ENCODE measurements at regions of chr19 and their contacts with region 1.

Region 1: DNA sequence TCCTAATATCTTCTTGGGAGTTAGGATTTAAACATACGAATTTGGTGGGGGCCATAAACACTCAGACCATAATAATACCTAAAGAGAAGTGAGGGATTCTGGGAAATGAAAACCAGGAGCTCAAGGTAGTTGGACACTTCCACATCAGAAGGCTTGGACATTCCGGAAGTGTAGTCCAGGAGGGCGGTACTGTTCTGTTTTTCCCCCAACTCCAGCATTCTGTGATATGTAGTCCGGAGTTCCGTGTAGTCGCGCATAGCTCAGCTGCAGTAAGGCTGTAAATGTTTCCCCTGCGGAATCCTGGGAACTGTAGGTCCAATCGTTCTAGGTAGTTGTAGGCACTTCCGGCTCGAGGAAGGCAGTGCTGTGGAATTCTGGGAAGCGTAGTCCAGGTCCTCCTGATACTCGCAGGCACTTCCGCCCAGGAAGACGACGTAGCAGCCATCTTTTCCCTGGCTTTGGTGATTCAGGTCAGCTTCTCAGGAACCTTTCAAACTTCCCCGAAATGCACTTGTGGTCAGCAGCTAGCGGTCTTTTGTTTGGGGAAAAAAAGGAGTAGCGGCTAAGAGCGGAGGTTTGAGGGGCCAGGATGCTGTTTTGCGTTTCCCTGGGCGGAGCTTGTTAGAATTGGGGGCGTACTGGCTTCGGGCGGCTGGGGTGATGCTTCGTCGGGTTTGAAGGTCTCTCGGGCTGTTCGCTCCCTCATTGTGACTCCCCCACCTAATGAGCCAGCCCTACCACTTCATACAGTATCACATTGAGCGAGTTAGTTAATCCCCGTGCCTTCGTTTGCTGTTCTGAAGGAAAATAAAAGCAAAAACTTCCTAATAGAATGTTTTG is at the start of gene ZNF226:
- DNase-seq: peak; percentile 99
- ATAC-seq: peak; percentile 97
- H3K4me3 ChIP-seq: peak within 1 kb of the TSS; percentile 72
- H3K27ac ChIP-seq: peak within 1 kb of the TSS; percentile 88
- H3K4me1 ChIP-seq: no peaks in the 10 kb centered on the region
- H3K27me3 ChIP-seq: no peaks in the 10 kb centered on the region
- CTCF ChIP-seq: no peak
- POLR2A ChIP-seq: peak; percentile 24; the same call in 1 of the 2 replicates
- RAD21 ChIP-seq: no peak
- total RNA-seq, gene ZNF226: 14.0 and 16.7 TPM in 2 replicates

Region 2: GRCh38 chr19:43997631-43998290 is 167.1 kb before region 1 on chr19:
- CTCF ChIA-PET with region 1: no interaction called
- POLR2A ChIA-PET with region 1: no interaction called
- dilution Hi-C with region 1: no loop called
- in situ Hi-C with region 1: no loop called
- intact Hi-C with region 1: no loop called
- DNase-seq: peak; percentile 24
- ATAC-seq: no peak
- H3K4me3 ChIP-seq: no peak overlapping the region
- H3K27ac ChIP-seq: no peak overlapping the region
- H3K4me1 ChIP-seq: no peaks in the 10 kb centered on the region
- H3K27me3 ChIP-seq: no peaks in the 10 kb centered on the region
- CTCF ChIP-seq: no peak
- POLR2A ChIP-seq: no peak
- RAD21 ChIP-seq: no peak

Region 3: GRCh38 chr19:44113138-44113783 is 51.6 kb before region 1 on chr19 and contains the start of gene ZNF225:
- CTCF ChIA-PET with region 1: no interaction called
- POLR2A ChIA-PET with region 1: no interaction called
- dilution Hi-C with region 1: no loop called
- in situ Hi-C with region 1: no loop called
- intact Hi-C with region 1: loop called (anchors 2 kb)
- DNase-seq: peak; percentile 99
- ATAC-seq: peak; percentile 94
- H3K4me3 ChIP-seq: peak within 1 kb of the TSS; percentile 70
- H3K27ac ChIP-seq: peak within 1 kb of the TSS; percentile 74
- H3K4me1 ChIP-seq: no peaks in the 10 kb centered on the region
- H3K27me3 ChIP-seq: no peaks in the 10 kb centered on the region
- CTCF ChIP-seq: no peak
- POLR2A ChIP-seq: peak; percentile 65
- RAD21 ChIP-seq: no peak; the same call in none of the 2 replicates
- total RNA-seq, gene ZNF225: 5.7 and 6.1 TPM in 2 replicates

Region 4: DNA sequence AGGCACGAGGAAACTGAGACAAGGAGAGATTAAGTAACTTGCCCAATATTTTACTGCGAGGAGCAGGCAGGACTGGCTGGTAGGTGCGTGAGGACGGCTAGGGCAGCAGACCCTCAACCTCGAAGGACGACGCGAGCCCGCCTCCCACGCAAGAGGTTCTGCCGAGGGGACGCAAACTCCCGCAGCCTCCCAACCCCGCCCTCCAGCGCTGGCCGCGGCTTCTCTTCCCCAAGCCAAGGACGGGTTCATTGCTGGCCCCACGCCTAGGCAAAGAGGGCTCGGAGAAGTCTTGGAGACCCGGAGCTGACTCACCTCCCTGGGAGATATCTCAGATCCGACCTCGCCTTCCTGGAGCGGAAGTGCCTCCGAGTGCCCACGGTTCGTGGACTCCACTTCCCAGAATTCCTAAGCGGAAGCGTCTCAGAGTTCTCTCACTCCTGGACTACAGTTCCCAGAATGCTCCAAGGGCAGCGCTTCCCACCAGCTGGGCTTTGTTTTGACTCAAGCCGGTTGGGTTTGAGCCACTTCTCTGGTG is 139.8 kb after region 1 on chr19 and contains the start of gene ZNF235:
- CTCF ChIA-PET with region 1: interaction called, 3 read pairs
- POLR2A ChIA-PET with region 1: no interaction called
- dilution Hi-C with region 1: no loop called
- in situ Hi-C with region 1: no loop called
- intact Hi-C with region 1: loop called (anchors 10 kb)
- DNase-seq: peak; percentile 99
- ATAC-seq: peak; percentile 97
- H3K4me3 ChIP-seq: peak within 1 kb of the TSS; percentile 74
- H3K27ac ChIP-seq: peak within 1 kb of the TSS; percentile 86
- H3K4me1 ChIP-seq: peaks cover 3% of the 10 kb centered on the region; the same call in 1 of the 2 replicates
- H3K27me3 ChIP-seq: no peaks in the 10 kb centered on the region
- CTCF ChIP-seq: no peak
- POLR2A ChIP-seq: no peak
- RAD21 ChIP-seq: no peak
- total RNA-seq, gene ZNF235: 3.0 and 3.1 TPM in 2 replicates

Measured in IMR-90 (cell line).